SK-N-SH (cell line): ENCODE measurements at regions of chr11 and their contacts with region 1.

Region 1: GRCh38 chr11:57456960-57457642 is 3.2 kb upstream of the RTN4RL2 start:
- DNase-seq: peak; percentile 85
- H3K4me3 ChIP-seq: no peak overlapping the region; a peak in 1 of 4 replicates
- H3K27ac ChIP-seq: no peak overlapping the region
- H3K4me1 ChIP-seq: peaks cover 11 to 22% of the 10 kb centered on the region in 2 experiments; a peak in 2 of 4 replicates
- H3K27me3 ChIP-seq: peaks cover 33% of the 10 kb centered on the region
- CTCF ChIP-seq: peak; percentile 87
- EP300 ChIP-seq: no peak
- RAD21 ChIP-seq: peak; percentile 92

Region 2: DNA sequence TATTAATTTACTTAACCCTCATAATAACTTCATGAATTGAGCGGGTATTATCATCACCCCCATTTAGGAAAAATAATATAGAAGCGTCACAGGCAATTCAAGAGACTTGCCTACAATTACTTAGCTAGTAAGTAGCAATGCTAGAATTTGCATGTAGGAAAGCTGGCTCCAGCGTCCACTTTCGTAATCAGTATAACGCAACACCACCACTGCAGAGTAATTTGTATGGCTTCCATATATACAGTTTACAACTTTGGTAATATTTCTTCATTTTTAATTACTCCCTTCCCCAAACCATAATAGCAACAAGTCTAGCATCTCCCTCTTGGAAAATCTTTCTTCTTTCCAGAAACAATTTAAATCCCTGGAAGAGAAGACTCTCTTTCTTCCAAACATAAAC is 558.2 kb before region 1 on chr11:
- CTCF ChIA-PET with region 1: no interaction called
- POLR2A ChIA-PET with region 1: no interaction called
- DNase-seq: no peak
- H3K4me3 ChIP-seq: no peak overlapping the region
- H3K27ac ChIP-seq: no peak overlapping the region
- H3K4me1 ChIP-seq: no peaks in the 10 kb centered on the region
- H3K27me3 ChIP-seq: no peaks in the 10 kb centered on the region
- CTCF ChIP-seq: no peak
- EP300 ChIP-seq: no peak
- RAD21 ChIP-seq: no peak

Region 3: GRCh38 chr11:57434640-57435546 is 22.2 kb before region 1 on chr11:
- CTCF ChIA-PET with region 1: interaction called, 43 read pairs
- POLR2A ChIA-PET with region 1: no interaction called
- DNase-seq: no peak
- H3K4me3 ChIP-seq: no peak overlapping the region
- H3K27ac ChIP-seq: no peak overlapping the region
- H3K4me1 ChIP-seq: no peaks in the 10 kb centered on the region
- H3K27me3 ChIP-seq: no peaks in the 10 kb centered on the region
- CTCF ChIP-seq: no peak
- EP300 ChIP-seq: no peak
- RAD21 ChIP-seq: no peak

Region 4: GRCh38 chr11:57480409-57481137 is 23.5 kb after region 1 on chr11:
- CTCF ChIA-PET with region 1: interaction called, 306 read pairs
- POLR2A ChIA-PET with region 1: interaction called, 3 read pairs
- DNase-seq: peak; percentile 82
- H3K4me3 ChIP-seq: peak overlapping the region in 1 of 2 experiments; percentile 26; a peak in 1 of 4 replicates
- H3K27ac ChIP-seq: no peak overlapping the region
- H3K4me1 ChIP-seq: peaks cover 4 to 17% of the 10 kb centered on the region in 2 experiments; a peak in 2 of 4 replicates
- H3K27me3 ChIP-seq: peaks cover 28% of the 10 kb centered on the region
- CTCF ChIP-seq: peak; percentile 61
- EP300 ChIP-seq: no peak
- RAD21 ChIP-seq: peak; percentile 52

Region 5: GRCh38 chr11:57499413-57499982 is 42.4 kb after region 1 on chr11:
- CTCF ChIA-PET with region 1: interaction called, 57 read pairs
- POLR2A ChIA-PET with region 1: interaction called, 3 read pairs
- DNase-seq: peak; percentile 100
- H3K4me3 ChIP-seq: peak overlapping the region; percentile 30 to 36; a peak in 3 of 4 replicates
- H3K27ac ChIP-seq: peak overlapping the region in 1 of 2 experiments; percentile 51; a peak in 1 of 4 replicates
- H3K4me1 ChIP-seq: peaks cover 11 to 12% of the 10 kb centered on the region in 2 experiments; a peak in 2 of 4 replicates
- H3K27me3 ChIP-seq: no peaks in the 10 kb centered on the region
- CTCF ChIP-seq: no peak
- EP300 ChIP-seq: no peak
- RAD21 ChIP-seq: no peak

Region 6: DNA sequence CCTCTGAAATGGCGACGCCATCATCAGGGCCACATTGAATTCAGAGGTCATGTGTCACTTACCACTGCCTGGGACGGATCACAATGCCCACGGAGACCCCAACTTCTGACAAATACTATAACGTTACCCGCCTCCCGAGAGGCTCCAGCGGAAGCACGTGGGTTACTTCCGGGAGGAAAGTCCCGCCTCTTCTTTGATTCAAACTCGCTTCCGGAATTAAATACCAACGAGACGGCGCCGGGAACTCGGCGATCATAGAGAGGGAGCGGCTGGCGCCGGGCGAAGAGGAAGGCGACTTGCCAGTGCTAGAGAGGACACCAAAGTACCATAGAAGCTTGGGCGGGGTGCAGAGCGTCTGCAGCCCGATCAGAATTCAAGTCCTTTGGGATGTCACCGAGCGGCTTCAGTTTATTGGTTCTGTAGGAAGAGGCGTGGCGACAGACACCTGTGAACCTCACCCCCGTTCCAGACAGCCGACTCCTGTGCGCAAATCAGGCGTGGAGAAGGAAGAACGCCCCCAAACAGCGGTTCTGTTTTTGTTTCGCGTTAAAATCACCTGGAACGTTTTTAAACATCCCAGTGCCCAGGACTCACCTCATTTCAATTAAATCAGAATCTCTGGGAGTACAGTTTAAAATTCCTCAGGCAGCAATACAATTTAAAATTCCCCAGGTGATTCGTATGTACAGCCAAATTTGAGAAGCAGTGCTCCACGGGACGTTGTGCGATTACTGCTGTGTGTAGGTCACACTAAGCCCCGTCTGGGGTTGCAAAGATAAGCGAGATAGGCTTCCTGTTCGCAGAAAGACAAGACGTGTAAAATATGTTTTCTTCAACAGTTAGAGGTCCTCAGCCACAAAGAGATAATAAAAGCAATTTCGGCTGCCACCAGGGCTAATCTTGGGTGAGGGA is 73.8 kb after region 1 on chr11 and contains the start of gene TIMM10:
- CTCF ChIA-PET with region 1: interaction called, 174 read pairs
- POLR2A ChIA-PET with region 1: no interaction called
- DNase-seq: peak; percentile 88
- H3K4me3 ChIP-seq: peak within 1 kb of the TSS; percentile 83 to 95
- H3K27ac ChIP-seq: peak within 1 kb of the TSS; percentile 11 to 71; a peak in 3 of 4 replicates
- H3K4me1 ChIP-seq: peaks cover 0 to 9% of the 10 kb centered on the region in 2 experiments; a peak in 2 of 4 replicates
- H3K27me3 ChIP-seq: no peaks in the 10 kb centered on the region
- CTCF ChIP-seq: no peak
- EP300 ChIP-seq: peak in 1 of 2 experiments; percentile 33; a peak in 1 of 4 replicates
- RAD21 ChIP-seq: 0 out of 2 replicates have a peak, but pooled peaks have one; percentile 9
- polyA plus RNA-seq, gene TIMM10: 179 and 189 TPM in 2 replicates

Region 7: DNA sequence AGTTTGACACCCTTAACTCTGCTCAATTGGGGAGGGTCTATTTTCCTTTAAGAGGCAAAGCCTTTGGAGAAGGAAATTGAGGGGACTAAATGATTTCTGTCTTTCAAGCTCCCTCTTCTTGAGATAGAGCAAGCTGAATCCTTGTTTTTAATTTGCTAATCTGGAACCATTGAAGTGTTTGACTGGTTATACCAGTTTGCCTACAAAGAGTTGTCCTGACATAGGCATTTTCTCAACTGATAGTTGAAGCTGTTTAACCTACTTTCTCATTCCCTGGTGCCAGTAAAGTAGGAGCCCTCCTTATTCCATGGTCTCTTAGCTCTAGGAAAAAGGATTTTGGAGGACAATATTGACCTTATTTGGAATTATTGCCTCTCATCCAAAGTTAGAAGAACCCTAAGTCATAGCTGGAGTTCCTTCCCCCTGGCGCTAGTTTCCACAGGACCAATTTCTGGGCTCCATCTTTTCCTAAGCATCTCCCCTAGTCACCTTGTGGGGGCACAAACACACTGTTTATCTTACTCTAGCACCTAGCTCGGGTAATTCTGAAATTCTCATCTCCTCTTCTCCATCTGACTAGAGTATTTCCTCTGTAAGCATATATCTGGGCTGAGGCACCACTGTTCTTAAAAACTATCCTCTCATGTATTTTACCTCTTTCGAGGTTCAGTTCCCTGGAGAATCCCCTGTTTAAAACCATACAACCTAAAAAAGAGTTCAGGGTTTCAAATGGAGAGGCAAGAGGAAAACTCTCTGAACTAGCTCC is 218.3 kb after region 1 on chr11:
- CTCF ChIA-PET with region 1: no interaction called
- POLR2A ChIA-PET with region 1: no interaction called
- DNase-seq: no peak
- H3K4me3 ChIP-seq: no peak overlapping the region
- H3K27ac ChIP-seq: no peak overlapping the region
- H3K4me1 ChIP-seq: no peaks in the 10 kb centered on the region; a peak in 1 of 4 replicates
- H3K27me3 ChIP-seq: no peaks in the 10 kb centered on the region
- CTCF ChIP-seq: no peak
- EP300 ChIP-seq: no peak
- RAD21 ChIP-seq: no peak